ENCODE measurements at regions of chr13 and their contacts with region 1.

Region 1: GRCh38 chr13:24220086-24220703 is 59.7 kb downstream of the SPATA13 start:
- DNase-seq: no peak
- ATAC-seq: peak; percentile 63 to 83 (median 78)
- H3K4me3 ChIP-seq: no peak overlapping the region
- H3K27ac ChIP-seq: no peak overlapping the region
- H3K4me1 ChIP-seq: no peaks in the 10 kb centered on the region
- H3K27me3 ChIP-seq: no peaks in the 10 kb centered on the region
- CTCF ChIP-seq: peak; percentile 72

Region 2: DNA sequence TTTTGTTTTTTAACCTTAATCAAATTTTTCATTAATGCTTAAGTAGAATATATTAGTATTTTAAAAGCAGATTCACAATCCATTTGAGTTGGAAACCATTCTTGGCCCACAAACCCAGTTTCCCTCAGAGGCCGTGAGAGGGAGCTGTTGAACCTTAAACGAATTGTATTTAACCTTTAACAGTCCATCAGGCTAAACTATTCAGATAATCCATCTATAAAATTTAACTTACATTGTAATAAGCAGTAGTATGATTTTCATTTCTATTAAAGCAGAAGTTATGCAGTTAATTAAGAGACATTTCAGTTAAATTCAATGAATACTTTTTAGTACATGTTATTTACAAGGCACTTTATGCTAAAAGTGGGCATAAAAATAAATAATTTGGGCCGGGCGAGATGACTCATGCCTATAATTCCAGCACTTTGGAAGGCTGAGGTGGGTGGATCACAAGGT is 199.8 kb before region 1 on chr13:
- intact Hi-C with region 1: loop called (anchors 5 kb)
- DNase-seq: no peak
- ATAC-seq: no peak
- H3K4me3 ChIP-seq: no peak overlapping the region
- H3K27ac ChIP-seq: no peak overlapping the region
- H3K4me1 ChIP-seq: no peaks in the 10 kb centered on the region
- H3K27me3 ChIP-seq: no peaks in the 10 kb centered on the region
- CTCF ChIP-seq: peak; percentile 58

Region 3: GRCh38 chr13:24053519-24054251 is 166.5 kb before region 1 on chr13:
- intact Hi-C with region 1: loop called (anchors 1 to 10 kb)
- DNase-seq: no peak
- ATAC-seq: peak in 1 of 4 donors; percentile 70
- H3K4me3 ChIP-seq: no peak overlapping the region
- H3K27ac ChIP-seq: no peak overlapping the region
- H3K4me1 ChIP-seq: no peaks in the 10 kb centered on the region
- H3K27me3 ChIP-seq: peaks cover 0 to 15% (median 0%) of the 10 kb centered on the region in 3 donors
- CTCF ChIP-seq: peak; percentile 51